ENCODE measurements at regions of chr3 and their contacts with region 1.

Region 1: DNA sequence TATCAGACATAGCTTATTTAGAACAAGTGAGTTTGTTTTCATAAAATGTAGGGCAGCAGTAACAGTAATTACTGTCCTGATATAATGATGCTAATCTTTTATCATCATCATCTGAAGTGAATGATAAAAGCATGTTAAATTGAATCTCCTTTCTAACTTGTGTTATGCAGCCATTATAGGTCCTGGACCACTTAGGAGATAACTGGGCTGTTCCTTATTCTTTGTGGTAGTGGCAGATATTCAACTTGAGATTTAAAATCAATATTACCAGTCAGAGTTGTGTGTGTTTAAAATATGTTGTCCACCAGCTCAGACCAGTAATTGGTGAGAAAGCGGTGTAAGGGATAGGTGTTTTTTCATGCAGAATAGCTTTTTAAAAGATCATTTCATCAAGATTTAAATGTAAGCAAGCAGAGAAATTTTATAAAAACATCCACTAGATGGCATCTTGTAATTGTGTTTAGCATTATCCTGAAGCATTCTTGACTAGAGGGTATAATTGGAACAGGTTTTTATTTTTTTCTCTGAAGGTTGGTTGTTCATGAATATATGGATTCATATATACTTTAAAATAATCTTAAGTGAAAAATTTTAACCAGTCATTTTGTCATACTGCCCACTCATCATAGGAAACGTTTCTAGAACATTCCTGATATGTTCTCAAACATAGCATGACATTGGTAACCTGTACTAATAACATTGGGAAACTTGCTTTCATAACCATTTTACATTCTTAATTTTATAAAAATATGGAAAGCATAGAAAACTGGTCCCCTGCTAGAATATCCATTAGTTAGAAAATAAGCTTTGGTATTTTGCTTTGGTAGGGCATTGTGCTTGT is 153.9 kb downstream of the BBX start:
- DNase-seq: no peak
- ATAC-seq: peak; percentile 57
- H3K4me3 ChIP-seq: no peak overlapping the region
- H3K27ac ChIP-seq: no peak overlapping the region
- H3K4me1 ChIP-seq: peaks cover 12% of the 10 kb centered on the region
- H3K27me3 ChIP-seq: no peaks in the 10 kb centered on the region
- CTCF ChIP-seq: peak; percentile 24 to 47 (median 39); a peak in 3 of 6 replicates
- EP300 ChIP-seq: no peak
- POLR2A ChIP-seq: no peak
- RAD21 ChIP-seq: peak; percentile 57

Region 2: GRCh38 chr3:107235928-107236315 is 440.8 kb before region 1 on chr3:
- CTCF ChIA-PET with region 1: interaction called, 7 read pairs
- POLR2A ChIA-PET with region 1: no interaction called
- RAD21 ChIA-PET with region 1: no interaction called
- SMC1A ChIA-PET with region 1: interaction called, 3 read pairs
- in situ Hi-C with region 1: no loop called
- intact Hi-C with region 1: loop called (anchors 10 kb)
- DNase-seq: peak; percentile 31
- ATAC-seq: peak; percentile 70
- H3K4me3 ChIP-seq: no peak overlapping the region
- H3K27ac ChIP-seq: no peak overlapping the region
- H3K4me1 ChIP-seq: no peaks in the 10 kb centered on the region; the same call in 1 of the 2 replicates
- H3K27me3 ChIP-seq: no peaks in the 10 kb centered on the region
- CTCF ChIP-seq: peak; percentile 69 to 90 (median 84)
- EP300 ChIP-seq: no peak
- POLR2A ChIP-seq: no peak
- RAD21 ChIP-seq: peak; percentile 98

Region 3: GRCh38 chr3:107346564-107346963 is 330.1 kb before region 1 on chr3:
- CTCF ChIA-PET with region 1: no interaction called
- POLR2A ChIA-PET with region 1: no interaction called
- RAD21 ChIA-PET with region 1: no interaction called
- SMC1A ChIA-PET with region 1: no interaction called
- in situ Hi-C with region 1: no loop called
- intact Hi-C with region 1: no loop called
- DNase-seq: no peak
- ATAC-seq: no peak
- H3K4me3 ChIP-seq: no peak overlapping the region
- H3K27ac ChIP-seq: no peak overlapping the region
- H3K4me1 ChIP-seq: no peaks in the 10 kb centered on the region
- H3K27me3 ChIP-seq: no peaks in the 10 kb centered on the region
- CTCF ChIP-seq: no peak
- EP300 ChIP-seq: no peak
- POLR2A ChIP-seq: no peak
- RAD21 ChIP-seq: no peak

Region 4: GRCh38 chr3:107627962-107628542 is 48.6 kb before region 1 on chr3:
- CTCF ChIA-PET with region 1: interaction called, 30 read pairs
- POLR2A ChIA-PET with region 1: no interaction called
- RAD21 ChIA-PET with region 1: interaction called, 17 read pairs
- SMC1A ChIA-PET with region 1: interaction called, 18 read pairs
- in situ Hi-C with region 1: no loop called
- intact Hi-C with region 1: no loop called
- DNase-seq: no peak
- ATAC-seq: peak; percentile 46; the same call in 1 of the 3 replicates
- H3K4me3 ChIP-seq: no peak overlapping the region
- H3K27ac ChIP-seq: no peak overlapping the region
- H3K4me1 ChIP-seq: peaks cover 10% of the 10 kb centered on the region
- H3K27me3 ChIP-seq: no peaks in the 10 kb centered on the region
- CTCF ChIP-seq: peak in 1 of 3 experiments; percentile 16; a peak in 2 of 6 replicates
- EP300 ChIP-seq: no peak
- POLR2A ChIP-seq: no peak
- RAD21 ChIP-seq: no peak

Region 5: GRCh38 chr3:107660306-107660976 is 16.2 kb before region 1 on chr3:
- CTCF ChIA-PET with region 1: interaction called, 212 read pairs
- POLR2A ChIA-PET with region 1: interaction called, 3 read pairs
- RAD21 ChIA-PET with region 1: interaction called, 49 read pairs
- SMC1A ChIA-PET with region 1: interaction called, 115 read pairs
- in situ Hi-C with region 1: no loop called
- intact Hi-C with region 1: no loop called
- DNase-seq: no peak
- ATAC-seq: peak; percentile 61
- H3K4me3 ChIP-seq: no peak overlapping the region
- H3K27ac ChIP-seq: no peak overlapping the region
- H3K4me1 ChIP-seq: peaks cover 13% of the 10 kb centered on the region
- H3K27me3 ChIP-seq: no peaks in the 10 kb centered on the region
- CTCF ChIP-seq: peak; percentile 49 to 61 (median 57); a peak in 5 of 6 replicates
- EP300 ChIP-seq: no peak
- POLR2A ChIP-seq: no peak
- RAD21 ChIP-seq: peak; percentile 66

Region 6: DNA sequence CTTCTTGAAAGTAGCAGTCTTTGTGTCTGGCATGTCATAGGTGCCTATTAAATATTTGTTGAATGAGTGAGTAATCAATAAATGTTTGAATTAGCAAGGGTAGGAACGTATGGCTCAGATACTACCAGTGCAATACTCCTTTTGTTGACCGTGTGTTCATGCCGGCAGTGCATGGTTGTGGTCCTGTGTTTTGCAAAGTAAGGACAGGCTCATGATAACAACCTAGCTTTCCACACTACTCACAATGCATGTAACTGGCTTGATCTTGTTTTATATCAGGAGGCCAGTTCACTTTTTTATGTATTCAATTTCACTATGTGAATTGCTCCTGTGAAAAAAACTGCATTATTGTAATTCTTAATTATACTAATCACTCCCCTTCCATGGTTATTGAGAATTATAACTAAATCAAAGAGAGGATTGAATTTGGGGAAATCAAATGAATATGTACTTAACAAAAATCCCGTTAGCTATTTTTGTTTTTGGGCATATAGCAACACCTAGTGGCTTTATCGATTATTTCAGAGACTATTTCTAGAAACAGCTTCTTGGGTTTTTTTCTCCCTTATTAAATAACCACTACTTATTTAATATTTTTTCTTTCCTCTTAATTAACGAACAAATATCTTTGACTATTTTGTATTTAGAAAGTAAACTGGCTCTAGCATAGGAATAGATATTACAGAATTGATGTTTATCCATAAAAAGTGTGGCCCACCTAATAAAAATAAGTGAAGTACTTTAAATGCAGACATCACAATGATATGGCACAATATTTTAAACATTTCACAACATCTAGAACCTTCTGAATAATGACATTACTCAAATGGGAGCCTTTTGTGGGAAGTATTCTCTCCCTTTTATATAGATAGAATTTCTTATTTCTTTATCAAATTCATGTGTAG is 64.6 kb after region 1 on chr3:
- CTCF ChIA-PET with region 1: interaction called, 88 read pairs
- POLR2A ChIA-PET with region 1: no interaction called
- RAD21 ChIA-PET with region 1: interaction called, 20 read pairs
- SMC1A ChIA-PET with region 1: interaction called, 62 read pairs
- in situ Hi-C with region 1: no loop called
- intact Hi-C with region 1: loop called (anchors 5 kb)
- DNase-seq: no peak
- ATAC-seq: no peak
- H3K4me3 ChIP-seq: no peak overlapping the region
- H3K27ac ChIP-seq: no peak overlapping the region
- H3K4me1 ChIP-seq: no peaks in the 10 kb centered on the region
- H3K27me3 ChIP-seq: no peaks in the 10 kb centered on the region
- CTCF ChIP-seq: peak in 2 of 3 experiments; percentile 21 to 36; a peak in 3 of 6 replicates
- EP300 ChIP-seq: no peak
- POLR2A ChIP-seq: no peak
- RAD21 ChIP-seq: peak; percentile 67

Region 7: GRCh38 chr3:107927361-107928083 is 250.8 kb after region 1 on chr3:
- CTCF ChIA-PET with region 1: interaction called, 9 read pairs
- POLR2A ChIA-PET with region 1: no interaction called
- RAD21 ChIA-PET with region 1: interaction called, 3 read pairs
- SMC1A ChIA-PET with region 1: interaction called, 7 read pairs
- in situ Hi-C with region 1: no loop called
- intact Hi-C with region 1: loop called (anchors 5 kb)
- DNase-seq: no peak
- ATAC-seq: peak; percentile 99
- H3K4me3 ChIP-seq: peak overlapping the region; percentile 57; the same call in 1 of the 2 replicates
- H3K27ac ChIP-seq: no peak overlapping the region
- H3K4me1 ChIP-seq: peaks cover 3% of the 10 kb centered on the region; the same call in 1 of the 2 replicates
- H3K27me3 ChIP-seq: peaks cover 0 to 5% of the 10 kb centered on the region in 2 experiments; a peak in 3 of 4 replicates
- CTCF ChIP-seq: peak; percentile 77 to 93 (median 91)
- EP300 ChIP-seq: no peak
- POLR2A ChIP-seq: no peak
- RAD21 ChIP-seq: peak; percentile 60

Region 8: GRCh38 chr3:107956991-107957900 is 280.6 kb after region 1 on chr3:
- CTCF ChIA-PET with region 1: no interaction called
- POLR2A ChIA-PET with region 1: no interaction called
- RAD21 ChIA-PET with region 1: no interaction called
- SMC1A ChIA-PET with region 1: no interaction called
- in situ Hi-C with region 1: no loop called
- intact Hi-C with region 1: no loop called
- DNase-seq: no peak
- ATAC-seq: no peak
- H3K4me3 ChIP-seq: no peak overlapping the region
- H3K27ac ChIP-seq: no peak overlapping the region
- H3K4me1 ChIP-seq: no peaks in the 10 kb centered on the region
- H3K27me3 ChIP-seq: no peaks in the 10 kb centered on the region; a peak in 1 of 4 replicates
- CTCF ChIP-seq: no peak
- EP300 ChIP-seq: no peak
- POLR2A ChIP-seq: no peak
- RAD21 ChIP-seq: no peak

Measured in GM12878 (cell line).